T-cell (primary cell): ENCODE measurements at regions of chr21 and their contacts with region 1.

Region 1: DNA sequence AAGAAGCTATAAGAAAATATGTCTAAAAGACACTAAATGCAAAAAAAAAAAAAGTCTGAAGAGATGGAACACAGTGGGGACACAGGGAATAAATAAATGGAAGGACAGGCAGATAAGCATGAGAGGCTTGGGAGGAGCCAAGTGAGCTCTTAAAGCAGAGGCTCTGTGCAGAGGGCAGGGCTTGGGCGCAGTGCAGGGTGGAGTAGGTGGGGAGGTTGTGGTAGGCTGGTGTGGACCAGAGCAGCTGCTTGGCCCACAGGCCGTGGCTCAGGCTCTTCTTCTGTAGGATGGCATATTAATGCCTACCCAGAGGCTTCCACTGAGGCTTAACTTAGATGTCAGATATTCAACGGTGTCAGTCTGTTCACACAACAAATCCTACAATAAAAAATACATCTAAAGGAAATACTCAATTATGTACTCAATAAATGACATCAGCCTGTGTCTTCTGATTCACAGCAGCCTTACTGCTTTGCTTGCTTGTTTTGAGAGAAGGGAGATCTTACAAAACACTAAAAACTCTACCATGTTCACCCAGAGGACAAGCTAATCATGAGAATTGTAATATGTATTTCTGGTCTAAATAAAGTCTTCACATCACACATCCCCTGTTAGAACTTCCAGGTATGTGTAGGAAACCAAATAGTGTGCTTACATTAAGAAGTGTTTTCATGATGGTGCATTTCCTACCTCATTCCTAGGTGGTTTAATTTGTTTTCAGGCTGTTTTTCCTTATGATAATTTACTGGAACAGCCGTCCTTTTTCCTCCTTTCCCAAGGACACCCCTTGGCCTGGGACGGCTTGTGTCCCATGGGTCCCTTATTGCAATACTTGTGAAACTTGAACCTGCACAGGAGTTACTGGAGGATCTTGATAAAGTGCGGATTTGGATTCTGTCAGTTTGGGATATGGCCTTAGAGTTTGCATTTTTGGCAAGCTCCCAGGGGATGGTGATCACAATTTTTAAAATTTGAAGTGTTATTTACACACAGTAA is 24.9 kb downstream of the DIP2A start:
- DNase-seq: peak in 9 of 35 experiments; percentile 4 to 38 (median 12)
- ATAC-seq: peak in 3 of 4 experiments; percentile 38 to 67 (median 51)
- H3K4me3 ChIP-seq: no peak overlapping the region
- H3K4me3 Mint-ChIP-seq: no peak overlapping the region
- H3K27ac ChIP-seq: no peak overlapping the region
- H3K27ac Mint-ChIP-seq: peak overlapping the region in 1 of 2 donors; percentile 32
- H3K4me1 ChIP-seq: peaks cover 4 to 11% of the 10 kb centered on the region in 2 experiments
- H3K4me1 Mint-ChIP-seq: peaks cover 38 to 44% (median 44%) of the 10 kb centered on the region in 3 donors
- H3K27me3 ChIP-seq: no peaks in the 10 kb centered on the region
- H3K27me3 Mint-ChIP-seq: no peaks in the 10 kb centered on the region

Region 2: GRCh38 chr21:46559291-46559983 is 75.8 kb after region 1 on chr21:
- CTCF ChIA-PET with region 1: interaction called in 1 of 2 experiments, 10 read pairs
- POLR2A ChIA-PET with region 1: no interaction called
- DNase-seq: peak; percentile 37 to 79 (median 61)
- ATAC-seq: peak; percentile 78 to 84 (median 80)
- H3K4me3 ChIP-seq: peak overlapping the region; percentile 28 to 46
- H3K4me3 Mint-ChIP-seq: peak overlapping the region; percentile 73 to 80 (median 73)
- H3K27ac ChIP-seq: peak overlapping the region; percentile 85
- H3K27ac Mint-ChIP-seq: peak overlapping the region; percentile 98 to 100
- H3K4me1 ChIP-seq: peaks cover 53 to 87% of the 10 kb centered on the region in 2 experiments
- H3K4me1 Mint-ChIP-seq: peaks cover 74 to 85% (median 76%) of the 10 kb centered on the region in 3 donors
- H3K27me3 ChIP-seq: no peaks in the 10 kb centered on the region
- H3K27me3 Mint-ChIP-seq: no peaks in the 10 kb centered on the region